ENCODE measurements at regions of chr12 and their contacts with region 1.

Region 1: GRCh38 chr12:120580787-120581723 is at the start of gene POP5:
- DNase-seq: peak; percentile 90 to 96 (median 91)
- H3K4me3 ChIP-seq: peak within 1 kb of the TSS; percentile 90 to 94
- H3K4me3 Mint-ChIP-seq: peak within 1 kb of the TSS; percentile 96 to 99 (median 98)
- H3K27ac ChIP-seq: peak within 1 kb of the TSS; percentile 72
- H3K27ac Mint-ChIP-seq: peak within 1 kb of the TSS; percentile 92 to 98 (median 96)
- H3K4me1 ChIP-seq: peaks cover 34% of the 10 kb centered on the region
- H3K4me1 Mint-ChIP-seq: peaks cover 17 to 43% (median 37%) of the 10 kb centered on the region in 4 donors
- H3K27me3 ChIP-seq: no peaks in the 10 kb centered on the region
- H3K27me3 Mint-ChIP-seq: no peaks in the 10 kb centered on the region
- total RNA-seq, gene POP5: 70.4 to 70.7 TPM

Region 2: DNA sequence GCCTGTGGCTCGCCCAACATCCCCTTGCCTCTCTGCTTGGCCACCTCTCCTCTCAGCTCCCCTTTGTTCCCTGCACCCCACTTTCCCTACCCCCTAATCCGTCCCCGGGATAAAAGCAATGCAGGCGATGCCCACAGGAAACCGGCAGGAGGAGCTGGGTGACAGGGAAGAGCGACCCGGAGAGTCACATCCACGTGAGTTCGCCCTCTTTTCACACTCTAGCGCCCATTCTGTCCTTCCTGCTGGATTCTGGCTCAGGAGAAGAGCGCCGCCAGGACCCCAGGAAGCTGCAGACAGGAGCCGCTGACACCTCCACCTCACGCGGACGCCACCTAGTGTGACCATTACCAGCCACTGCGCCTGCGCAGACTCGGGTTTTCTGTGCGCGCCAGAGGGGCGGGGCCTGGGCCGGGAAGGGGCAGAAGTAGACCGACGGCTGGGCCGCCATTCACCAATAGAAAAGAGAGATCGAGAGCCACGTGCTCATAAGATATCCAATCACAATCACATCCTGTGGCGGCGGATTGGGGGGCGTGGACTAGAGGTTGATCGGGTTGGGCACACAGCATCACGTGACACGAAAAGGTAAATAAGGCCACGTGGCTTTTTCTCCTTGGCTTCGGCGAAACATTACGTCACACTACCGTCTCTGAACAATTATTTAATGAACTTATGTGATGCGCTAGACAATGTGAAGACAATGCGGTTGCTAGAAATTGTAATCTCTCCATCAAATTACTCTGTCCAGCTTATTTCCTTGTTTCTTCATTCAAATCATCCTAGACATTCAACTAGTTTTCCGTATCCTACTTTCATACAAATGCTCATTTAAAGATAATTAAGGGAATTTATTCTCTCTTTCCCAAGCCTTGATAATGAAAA is 263.6 kb before region 1 on chr12:
- CTCF ChIA-PET with region 1: no interaction called
- POLR2A ChIA-PET with region 1: no interaction called
- intact Hi-C with region 1: loop called (anchors 1 kb)
- DNase-seq: peak; percentile 100
- H3K4me3 ChIP-seq: peak overlapping the region; percentile 42 to 65
- H3K4me3 Mint-ChIP-seq: peak overlapping the region; percentile 87 to 95 (median 92)
- H3K27ac ChIP-seq: peak overlapping the region; percentile 81
- H3K27ac Mint-ChIP-seq: peak overlapping the region; percentile 90 to 99 (median 98)
- H3K4me1 ChIP-seq: peaks cover 10% of the 10 kb centered on the region
- H3K4me1 Mint-ChIP-seq: peaks cover 11 to 16% (median 14%) of the 10 kb centered on the region in 4 donors
- H3K27me3 ChIP-seq: no peaks in the 10 kb centered on the region
- H3K27me3 Mint-ChIP-seq: no peaks in the 10 kb centered on the region

Region 3: DNA sequence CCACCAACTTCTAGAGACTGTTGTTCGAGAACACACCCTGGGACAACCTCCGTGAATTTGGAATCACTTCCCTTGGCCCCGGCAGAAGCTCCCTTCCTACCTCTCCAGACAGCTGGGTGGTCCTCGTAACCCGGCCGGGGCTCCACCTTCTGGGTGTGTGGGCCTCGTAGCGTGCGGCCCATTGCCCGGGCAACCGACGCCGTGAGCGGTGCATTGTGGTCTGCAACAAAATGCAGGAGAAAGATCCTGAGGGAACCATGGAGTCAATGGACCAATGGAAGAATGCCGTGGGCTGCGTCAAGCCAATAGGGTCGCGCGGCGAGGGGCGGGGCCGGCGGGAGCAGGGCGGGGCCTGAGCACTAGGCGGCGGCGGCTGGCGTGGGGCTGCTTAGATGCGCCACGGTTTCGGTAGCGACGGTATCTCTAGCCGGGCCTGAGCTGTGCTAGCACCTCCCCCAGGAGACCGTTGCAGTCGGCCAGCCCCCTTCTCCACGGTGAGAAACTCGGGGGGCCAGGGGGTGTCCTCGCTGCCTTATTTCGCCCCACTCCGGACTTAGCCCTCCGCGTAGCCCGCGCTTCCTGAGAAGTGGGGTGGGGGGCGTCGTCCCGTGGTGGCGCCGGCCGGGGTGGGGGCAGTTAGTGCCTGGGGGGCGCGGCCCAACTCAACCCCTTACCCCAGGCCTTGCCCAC is 85.2 kb before region 1 on chr12 and contains the start of gene DYNLL1:
- CTCF ChIA-PET with region 1: interaction called, 5 read pairs
- POLR2A ChIA-PET with region 1: interaction called, 6 read pairs
- intact Hi-C with region 1: loop called (anchors 1 kb)
- DNase-seq: peak; percentile 96 to 98 (median 97)
- H3K4me3 ChIP-seq: peak within 1 kb of the TSS; percentile 93 to 94
- H3K4me3 Mint-ChIP-seq: peak within 1 kb of the TSS; percentile 91 to 98 (median 94)
- H3K27ac ChIP-seq: peak within 1 kb of the TSS; percentile 82
- H3K27ac Mint-ChIP-seq: peak within 1 kb of the TSS; percentile 89 to 96 (median 94)
- H3K4me1 ChIP-seq: peaks cover 19% of the 10 kb centered on the region
- H3K4me1 Mint-ChIP-seq: peaks cover 22 to 49% (median 37%) of the 10 kb centered on the region in 4 donors
- H3K27me3 ChIP-seq: no peaks in the 10 kb centered on the region
- H3K27me3 Mint-ChIP-seq: no peaks in the 10 kb centered on the region
- total RNA-seq, gene DYNLL1: 97.5 to 108 TPM

Region 4: GRCh38 chr12:120546050-120546386 is 35.0 kb before region 1 on chr12:
- CTCF ChIA-PET with region 1: no interaction called
- POLR2A ChIA-PET with region 1: no interaction called
- intact Hi-C with region 1: no loop called
- DNase-seq: no peak
- H3K4me3 ChIP-seq: no peak overlapping the region
- H3K4me3 Mint-ChIP-seq: no peak overlapping the region
- H3K27ac ChIP-seq: no peak overlapping the region
- H3K27ac Mint-ChIP-seq: peak overlapping the region in 2 of 7 donors; percentile 4 to 65
- H3K4me1 ChIP-seq: peaks cover 37% of the 10 kb centered on the region
- H3K4me1 Mint-ChIP-seq: peaks cover 9 to 34% (median 18%) of the 10 kb centered on the region in 4 donors
- H3K27me3 ChIP-seq: no peaks in the 10 kb centered on the region
- H3K27me3 Mint-ChIP-seq: no peaks in the 10 kb centered on the region

Region 5: GRCh38 chr12:120710031-120710804 is 129.2 kb after region 1 on chr12 and contains the start of gene UNC119B:
- CTCF ChIA-PET with region 1: interaction called, 7 read pairs
- POLR2A ChIA-PET with region 1: interaction called, 15 read pairs
- intact Hi-C with region 1: loop called (anchors 1 kb)
- DNase-seq: peak; percentile 66 to 78 (median 70)
- H3K4me3 ChIP-seq: peak within 1 kb of the TSS; percentile 49 to 68
- H3K4me3 Mint-ChIP-seq: peak within 1 kb of the TSS; percentile 89 to 96 (median 94)
- H3K27ac ChIP-seq: peak within 1 kb of the TSS; percentile 78
- H3K27ac Mint-ChIP-seq: peak within 1 kb of the TSS; percentile 83 to 98 (median 93)
- H3K4me1 ChIP-seq: peaks cover 26% of the 10 kb centered on the region
- H3K4me1 Mint-ChIP-seq: peaks cover 17 to 41% (median 32%) of the 10 kb centered on the region in 4 donors
- H3K27me3 ChIP-seq: no peaks in the 10 kb centered on the region
- H3K27me3 Mint-ChIP-seq: no peaks in the 10 kb centered on the region
- total RNA-seq, gene UNC119B: 28.7 to 29.1 TPM

Region 6: GRCh38 chr12:120971299-120972179 is 390.5 kb after region 1 on chr12:
- CTCF ChIA-PET with region 1: interaction called, 31 read pairs
- POLR2A ChIA-PET with region 1: no interaction called
- intact Hi-C with region 1: loop called (anchors 1 kb)
- DNase-seq: peak in 4 of 5 donors; percentile 59 to 68 (median 62)
- H3K4me3 ChIP-seq: no peak overlapping the region
- H3K4me3 Mint-ChIP-seq: no peak overlapping the region
- H3K27ac ChIP-seq: no peak overlapping the region
- H3K27ac Mint-ChIP-seq: peak overlapping the region in 2 of 7 donors; percentile 37 to 51
- H3K4me1 ChIP-seq: peaks cover 3% of the 10 kb centered on the region
- H3K4me1 Mint-ChIP-seq: peaks cover 6 to 9% (median 6%) of the 10 kb centered on the region in 4 donors
- H3K27me3 ChIP-seq: no peaks in the 10 kb centered on the region
- H3K27me3 Mint-ChIP-seq: no peaks in the 10 kb centered on the region